ENCODE measurements at regions of chr17 and their contacts with region 1.

Region 1: DNA sequence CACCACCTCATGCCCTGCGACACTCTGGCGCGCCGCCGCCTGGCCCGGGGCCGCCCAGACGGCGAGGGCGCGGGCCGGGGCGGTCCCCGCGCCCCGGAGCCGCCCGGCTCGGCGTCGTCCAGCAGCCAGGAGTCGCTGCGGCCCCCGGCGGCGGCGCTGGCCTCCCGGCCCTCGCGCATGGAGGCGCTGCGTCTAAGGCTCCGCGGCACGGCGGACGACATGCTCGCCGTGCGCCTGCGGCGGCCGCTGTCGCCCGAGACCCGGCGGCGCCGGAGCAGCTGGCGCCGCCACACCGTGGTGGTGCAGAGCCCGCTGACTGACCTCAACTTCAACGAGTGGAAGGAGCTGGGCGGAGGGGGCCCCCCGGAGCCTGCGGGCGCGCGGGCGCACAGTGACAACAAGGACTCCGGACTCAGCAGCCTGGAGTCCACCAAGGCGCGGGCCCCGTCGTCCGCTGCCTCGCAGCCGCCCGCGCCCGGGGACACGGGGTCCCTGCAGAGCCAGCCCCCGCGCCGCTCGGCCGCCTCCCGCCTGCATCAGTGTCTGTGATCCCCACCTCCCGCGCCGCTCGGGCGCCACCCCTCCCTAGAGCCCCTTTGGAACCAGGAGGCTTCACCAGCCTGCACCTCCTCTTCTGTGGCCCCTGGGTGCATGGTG is 82.3 kb downstream of the ARHGAP23 start:
- DNase-seq: peak in 2 of 5 donors; percentile 54 to 56
- H3K4me3 ChIP-seq: no peak overlapping the region
- H3K27ac ChIP-seq: no peak overlapping the region
- H3K4me1 ChIP-seq: peaks cover 7% of the 10 kb centered on the region
- H3K27me3 ChIP-seq: no peaks in the 10 kb centered on the region
- CTCF ChIP-seq: no peak
- EP300 ChIP-seq: no peak
- POLR2A ChIP-seq: no peak

Region 2: GRCh38 chr17:38430316-38430715 is 80.2 kb before region 1 on chr17:
- intact Hi-C with region 1: no loop called
- DNase-seq: peak in 1 of 5 donors; percentile 35
- H3K4me3 ChIP-seq: no peak overlapping the region
- H3K27ac ChIP-seq: peak overlapping the region in 1 of 2 donors; percentile 84
- H3K4me1 ChIP-seq: peaks cover 10% of the 10 kb centered on the region
- H3K27me3 ChIP-seq: no peaks in the 10 kb centered on the region
- CTCF ChIP-seq: no peak
- EP300 ChIP-seq: no peak
- POLR2A ChIP-seq: no peak

Region 3: DNA sequence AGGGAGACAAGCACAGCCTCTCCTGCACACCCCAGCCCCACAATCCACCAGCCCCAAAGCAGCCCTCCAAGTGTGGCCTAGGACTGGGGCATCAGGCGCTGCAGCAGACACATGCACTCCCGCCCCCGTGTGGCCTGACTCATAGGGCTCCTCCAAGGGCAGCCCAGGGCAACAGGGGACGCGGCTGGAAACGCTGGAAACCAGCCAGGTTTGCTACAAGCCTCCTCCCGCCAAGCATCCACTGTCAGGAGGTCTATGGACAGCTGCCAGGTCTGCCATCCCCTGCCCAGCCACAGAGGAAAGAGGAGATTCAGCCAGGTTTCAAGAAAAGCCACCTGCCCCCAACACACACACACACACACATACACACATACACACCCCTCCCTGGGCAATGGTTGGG is 69.4 kb after region 1 on chr17:
- intact Hi-C with region 1: loop called in 1 of 4 experiments (anchors 10 kb)
- DNase-seq: no peak
- H3K4me3 ChIP-seq: no peak overlapping the region
- H3K27ac ChIP-seq: no peak overlapping the region
- H3K4me1 ChIP-seq: no peaks in the 10 kb centered on the region
- H3K27me3 ChIP-seq: no peaks in the 10 kb centered on the region
- CTCF ChIP-seq: no peak
- EP300 ChIP-seq: no peak
- POLR2A ChIP-seq: no peak

Measured in ovary (tissue), 10 donors.